Sigmoid colon (tissue), 7 donors: ENCODE measurements at regions of chr3 and their contacts with region 1.

Region 1: DNA sequence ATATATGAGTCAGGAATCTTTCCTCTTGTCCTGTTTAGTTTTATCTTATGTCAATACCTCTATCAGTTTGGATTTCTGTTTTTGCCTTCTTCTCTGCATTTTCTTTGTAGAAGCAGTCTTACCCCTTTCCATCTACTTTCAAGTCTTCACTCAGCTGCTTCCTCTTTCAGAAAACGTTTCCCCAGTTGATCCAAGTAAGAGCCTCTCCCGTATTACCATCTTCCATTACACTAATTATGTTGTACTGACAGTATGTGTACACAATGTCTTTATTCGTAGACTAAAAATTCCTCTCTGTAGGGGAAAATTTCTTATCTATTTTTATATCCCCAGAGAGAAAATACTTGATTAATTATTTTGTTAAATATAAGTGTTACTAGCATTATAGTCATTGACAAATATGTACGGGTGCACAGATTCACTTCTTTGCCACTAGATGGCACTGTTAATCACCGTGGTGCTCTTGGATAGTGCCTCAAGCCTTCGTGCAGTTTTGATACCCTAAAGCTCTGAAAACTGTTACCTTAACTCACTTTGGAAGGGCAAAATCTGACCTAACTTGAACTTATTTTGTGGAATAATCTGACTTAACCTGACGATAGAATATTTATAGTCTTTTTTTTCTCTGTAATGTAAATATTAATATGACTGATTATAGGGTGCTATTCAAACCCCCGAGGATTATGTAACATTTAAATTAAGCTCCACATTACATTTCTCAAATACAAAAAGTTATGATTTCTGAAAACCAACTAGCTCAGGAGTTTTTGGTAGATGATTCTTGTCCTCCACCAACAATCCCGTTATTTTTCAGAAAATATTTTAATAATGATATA is 74.2 kb upstream of the POU1F1 start:
- DNase-seq: no peak
- H3K4me3 ChIP-seq: no peak overlapping the region
- H3K27ac ChIP-seq: no peak overlapping the region
- H3K4me1 ChIP-seq: no peaks in the 10 kb centered on the region
- H3K27me3 ChIP-seq: no peaks in the 10 kb centered on the region
- CTCF ChIP-seq: peak in 3 of 4 experiments; percentile 62 to 91 (median 67)
- EP300 ChIP-seq: no peak
- POLR2A ChIP-seq: no peak

Region 2: DNA sequence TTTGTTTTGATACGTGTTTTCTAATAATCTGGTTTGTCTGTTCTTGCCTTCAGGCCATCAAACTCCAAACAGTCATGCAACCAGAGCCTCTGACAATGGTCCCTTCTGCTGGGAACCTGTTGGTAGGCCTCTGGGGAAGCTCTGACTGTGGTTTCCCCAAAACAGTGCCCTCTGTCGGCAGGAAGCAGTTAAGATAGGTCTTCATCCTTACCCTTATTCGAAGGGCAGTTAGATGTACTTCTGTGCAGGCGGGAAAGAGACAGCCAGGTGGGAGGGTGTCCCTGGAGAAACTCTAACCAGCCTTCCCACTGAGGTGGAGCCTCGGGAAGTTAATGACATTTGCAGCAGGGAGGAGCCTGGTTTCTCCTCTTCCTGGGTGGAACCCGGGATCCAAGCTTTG is 205.0 kb before region 1 on chr3:
- intact Hi-C with region 1: no loop called
- DNase-seq: no peak
- H3K4me3 ChIP-seq: no peak overlapping the region
- H3K27ac ChIP-seq: no peak overlapping the region
- H3K4me1 ChIP-seq: no peaks in the 10 kb centered on the region
- H3K27me3 ChIP-seq: no peaks in the 10 kb centered on the region
- CTCF ChIP-seq: no peak
- EP300 ChIP-seq: no peak
- POLR2A ChIP-seq: no peak

Region 3: GRCh38 chr3:88113311-88114162 is 763.0 kb after region 1 on chr3:
- intact Hi-C with region 1: loop called (anchors 10 kb)
- DNase-seq: no peak
- H3K4me3 ChIP-seq: no peak overlapping the region
- H3K27ac ChIP-seq: no peak overlapping the region
- H3K4me1 ChIP-seq: peaks cover 0 to 19% (median 5%) of the 10 kb centered on the region in 4 donors
- H3K27me3 ChIP-seq: no peaks in the 10 kb centered on the region
- CTCF ChIP-seq: peak; percentile 41 to 68 (median 58)
- EP300 ChIP-seq: no peak
- POLR2A ChIP-seq: no peak